ENCODE measurements at regions of chr10 and their contacts with region 1.

Region 1: DNA sequence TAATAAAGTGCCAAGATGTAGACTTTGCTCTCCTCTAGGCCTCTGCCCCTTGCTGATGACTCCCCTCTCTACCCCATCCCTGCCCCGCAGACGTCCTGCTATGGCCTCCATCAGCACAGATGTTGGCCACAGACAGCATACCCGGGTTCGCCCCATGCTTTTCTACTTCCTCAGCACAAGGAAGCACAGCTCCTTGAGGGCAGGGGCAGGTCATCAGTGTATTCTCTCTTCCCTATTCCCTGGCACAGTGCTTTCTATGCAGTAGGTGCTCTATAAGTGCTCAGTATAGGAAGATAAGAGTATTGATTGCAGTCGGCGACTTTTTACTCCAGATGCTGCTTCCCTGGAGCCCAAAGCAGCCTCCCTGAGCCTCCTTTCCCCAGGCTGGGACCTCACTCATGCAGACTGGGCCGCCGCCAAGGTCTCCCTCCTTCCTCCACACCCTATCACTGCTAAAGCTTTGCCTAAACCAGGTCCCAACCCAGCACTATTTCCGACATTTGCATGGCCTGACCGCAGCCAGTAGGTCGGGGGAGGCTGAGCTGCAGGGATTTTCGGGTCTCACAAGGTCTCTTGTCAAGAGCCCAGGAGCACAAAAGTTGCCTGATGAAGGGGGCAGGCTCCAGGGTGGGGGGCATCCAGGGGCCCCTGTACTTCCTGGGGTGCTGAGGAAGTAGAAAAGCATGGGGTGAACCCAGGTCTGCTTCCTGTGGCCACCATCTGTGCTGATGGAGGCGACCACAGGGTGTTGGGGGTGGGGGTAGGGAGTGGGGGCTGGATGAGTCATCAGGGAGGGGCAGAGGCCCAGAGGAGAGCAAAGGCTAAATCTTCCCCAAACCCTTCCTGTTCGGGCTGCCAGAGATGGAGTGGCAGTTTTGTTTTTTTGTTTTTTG is 8.0 kb downstream of the CALHM3 start:
- DNase-seq: peak; percentile 69
- H3K4me3 Mint-ChIP-seq: peak overlapping the region; percentile 27
- H3K27ac Mint-ChIP-seq: peak overlapping the region; percentile 89
- H3K4me1 Mint-ChIP-seq: peaks cover 71% of the 10 kb centered on the region
- H3K27me3 Mint-ChIP-seq: no peaks in the 10 kb centered on the region

Region 2: DNA sequence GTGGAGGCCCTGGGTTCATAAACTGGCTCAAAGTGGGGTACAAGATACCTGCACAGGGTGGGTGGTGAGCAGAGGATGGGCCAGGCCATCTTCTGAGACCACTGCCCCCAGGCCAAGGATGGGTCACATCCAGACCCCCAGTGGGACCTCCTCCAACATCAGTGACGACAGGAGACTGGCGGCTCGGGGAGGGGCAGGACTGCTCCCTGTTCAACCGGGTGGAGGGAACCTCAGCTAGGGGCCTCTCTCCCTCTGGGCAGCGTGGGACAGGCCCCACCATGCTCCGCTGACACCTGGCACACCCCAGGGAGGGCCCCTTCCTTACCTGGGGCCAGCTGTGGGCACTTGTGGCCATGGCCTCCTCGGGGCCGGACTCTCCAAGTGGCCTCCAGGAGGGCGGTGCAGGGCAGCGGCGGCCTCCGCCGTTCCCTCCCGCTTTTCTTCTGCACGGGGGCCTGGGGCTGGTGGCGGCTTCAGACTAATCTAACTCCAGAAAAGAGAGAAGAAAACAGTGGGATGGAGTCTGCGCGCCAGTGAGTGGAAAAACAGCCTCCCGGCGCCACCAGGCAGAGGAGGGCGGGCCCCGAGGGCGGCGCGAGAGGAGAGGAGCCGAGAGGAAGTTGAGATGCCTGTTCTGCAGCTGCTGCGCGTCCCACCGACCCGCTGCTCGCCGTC is 19.0 kb before region 1 on chr10 and contains the start of gene CALHM2:
- intact Hi-C with region 1: loop called (anchors 1 kb)
- DNase-seq: peak; percentile 54
- H3K4me3 Mint-ChIP-seq: peak within 1 kb of the TSS; percentile 90
- H3K27ac Mint-ChIP-seq: peak within 1 kb of the TSS; percentile 88
- H3K4me1 Mint-ChIP-seq: peaks cover 48% of the 10 kb centered on the region
- H3K27me3 Mint-ChIP-seq: no peaks in the 10 kb centered on the region
- total RNA-seq, gene CALHM2: 18.6 and 19.1 TPM in 2 replicates